ENCODE measurements at regions of chr3 and their contacts with region 1.

Region 1: GRCh38 chr3:113495035-113495434 is 19.9 kb downstream of the SPICE1 start:
- DNase-seq: peak; percentile 61
- ATAC-seq: peak; percentile 60
- H3K4me3 Mint-ChIP-seq: no peak overlapping the region
- H3K27ac Mint-ChIP-seq: no peak overlapping the region
- H3K4me1 Mint-ChIP-seq: no peaks in the 10 kb centered on the region
- H3K27me3 Mint-ChIP-seq: no peaks in the 10 kb centered on the region

Region 2: DNA sequence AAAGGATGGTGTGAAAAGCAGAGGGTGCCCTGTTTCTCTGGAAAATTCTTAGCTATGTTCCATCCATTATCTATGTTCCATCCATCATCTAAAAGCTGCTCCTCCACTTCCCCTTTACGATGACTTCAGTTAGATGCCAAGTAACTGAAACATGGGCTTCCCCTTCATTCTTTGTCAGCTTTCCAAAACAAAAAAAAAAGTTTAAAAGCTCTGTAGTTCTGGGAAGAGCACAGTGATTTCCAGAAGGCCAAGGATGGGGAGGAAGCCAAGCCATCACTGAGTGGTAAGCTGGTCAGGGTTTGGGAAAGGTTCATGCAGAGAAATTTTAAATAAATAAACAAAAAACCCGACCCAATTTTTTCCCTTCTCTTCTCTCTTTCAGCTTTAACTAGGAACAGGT is 165.3 kb before region 1 on chr3:
- CTCF ChIA-PET with region 1: no interaction called
- DNase-seq: no peak
- ATAC-seq: no peak
- H3K4me3 Mint-ChIP-seq: no peak overlapping the region
- H3K27ac Mint-ChIP-seq: no peak overlapping the region
- H3K4me1 Mint-ChIP-seq: no peaks in the 10 kb centered on the region
- H3K27me3 Mint-ChIP-seq: no peaks in the 10 kb centered on the region

Region 3: DNA sequence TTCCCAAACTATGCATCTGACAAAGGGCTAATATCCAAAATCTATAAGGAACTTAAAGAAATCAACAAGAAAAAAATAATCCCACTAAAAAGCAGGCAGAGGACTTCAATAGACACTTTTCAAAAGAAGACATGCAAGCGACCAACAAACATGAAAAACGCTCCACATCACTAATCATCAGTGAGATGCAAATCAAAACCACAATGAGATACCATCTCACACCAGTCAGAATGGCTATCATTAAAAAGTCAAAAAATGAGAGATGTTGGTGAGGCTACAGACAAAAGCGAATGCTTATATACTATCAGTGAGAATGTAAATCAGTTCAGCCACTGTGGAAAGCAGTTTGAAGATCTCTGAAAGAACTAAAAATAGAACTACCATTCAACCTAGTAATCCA is 74.0 kb before region 1 on chr3:
- CTCF ChIA-PET with region 1: no interaction called
- DNase-seq: no peak
- ATAC-seq: no peak
- H3K4me3 Mint-ChIP-seq: no peak overlapping the region
- H3K27ac Mint-ChIP-seq: no peak overlapping the region
- H3K4me1 Mint-ChIP-seq: no peaks in the 10 kb centered on the region
- H3K27me3 Mint-ChIP-seq: no peaks in the 10 kb centered on the region

Region 4: DNA sequence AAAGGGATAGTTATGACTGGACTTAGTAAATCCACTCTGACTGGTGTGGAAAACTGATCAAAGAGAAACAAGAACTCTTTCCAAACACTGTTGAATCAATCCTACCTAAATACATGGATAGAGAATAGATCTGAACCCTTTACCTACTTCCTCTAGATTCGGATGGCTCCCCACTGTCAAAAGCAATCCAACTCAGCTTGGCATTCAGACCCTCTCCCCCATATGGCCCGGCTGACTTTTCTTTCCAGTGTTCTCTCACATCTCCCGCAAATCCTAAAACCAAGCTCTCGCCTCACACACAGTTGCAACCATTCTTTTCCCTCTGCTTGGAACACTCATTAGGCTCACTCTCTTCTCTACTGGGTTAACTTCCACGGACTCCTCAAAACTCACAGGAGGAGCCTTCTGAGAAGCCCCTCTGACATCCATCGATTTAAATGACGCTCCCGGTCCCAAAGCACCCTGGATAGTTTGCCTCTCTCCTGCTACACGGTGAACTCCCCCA is 19.3 kb after region 1 on chr3:
- CTCF ChIA-PET with region 1: interaction called, 15 read pairs
- DNase-seq: no peak
- ATAC-seq: no peak
- H3K4me3 Mint-ChIP-seq: no peak overlapping the region
- H3K27ac Mint-ChIP-seq: no peak overlapping the region
- H3K4me1 Mint-ChIP-seq: peaks cover 12% of the 10 kb centered on the region
- H3K27me3 Mint-ChIP-seq: peaks cover 25% of the 10 kb centered on the region

Region 5: DNA sequence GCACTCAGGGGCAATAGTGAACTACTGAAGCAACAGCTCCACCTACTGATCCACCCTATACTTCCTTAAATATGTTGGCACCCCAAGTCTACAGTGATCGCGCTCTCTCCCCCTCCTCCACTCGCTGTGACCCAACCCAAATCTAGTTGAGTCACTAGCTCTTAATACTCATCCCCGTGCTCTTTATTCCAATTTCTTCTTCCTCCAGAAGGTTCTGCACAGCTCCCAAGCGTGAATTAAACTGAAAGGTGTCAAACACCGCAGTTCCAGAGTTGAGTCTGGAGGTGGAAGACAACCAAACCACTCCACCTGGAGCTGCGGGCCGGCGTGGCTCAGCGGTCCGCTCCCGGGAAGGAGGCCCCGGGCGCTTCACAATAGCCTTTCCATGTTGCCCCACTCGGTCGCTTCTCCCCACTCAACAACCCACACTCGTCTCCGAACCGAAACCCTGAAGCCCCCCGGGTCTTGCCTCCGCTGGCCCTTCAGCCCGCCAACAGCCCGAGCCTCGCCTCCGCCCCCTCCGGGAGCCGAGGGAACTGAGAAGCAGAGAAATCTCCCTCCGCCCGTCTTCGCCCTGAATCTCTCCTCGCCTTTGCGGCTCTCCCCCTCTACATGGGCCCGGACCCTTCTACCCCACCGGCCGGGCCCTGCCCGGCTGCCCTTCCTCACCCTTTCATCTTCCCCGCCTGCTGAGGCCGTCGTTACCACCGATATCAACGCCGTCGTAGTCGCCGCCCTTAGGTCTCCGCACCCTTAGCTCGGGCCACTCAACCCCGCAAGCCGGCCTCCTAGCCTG is 250.4 kb after region 1 on chr3:
- CTCF ChIA-PET with region 1: interaction called, 25 read pairs
- DNase-seq: peak; percentile 88
- ATAC-seq: peak; percentile 73
- H3K4me3 Mint-ChIP-seq: peak overlapping the region; percentile 92
- H3K27ac Mint-ChIP-seq: peak overlapping the region; percentile 100
- H3K4me1 Mint-ChIP-seq: peaks cover 58% of the 10 kb centered on the region
- H3K27me3 Mint-ChIP-seq: no peaks in the 10 kb centered on the region